ENCODE measurements at regions of chr2 and their contacts with region 1.

Region 1: GRCh38 chr2:196068271-196069209 is at the start of gene DNAH7:
- DNase-seq: peak; percentile 86
- H3K4me3 ChIP-seq: peak within 1 kb of the TSS; percentile 7 to 98 (median 52)
- H3K27ac ChIP-seq: peak within 1 kb of the TSS; percentile 27
- H3K4me1 ChIP-seq: peaks cover 5% of the 10 kb centered on the region
- H3K27me3 ChIP-seq: peaks cover 17 to 41% of the 10 kb centered on the region in 2 experiments
- CTCF ChIP-seq: peak; percentile 90 to 99
- POLR2A ChIP-seq: peak; percentile 45
- total RNA-seq, gene DNAH7: 0.05 and 0.24 TPM in 2 replicates

Region 2: GRCh38 chr2:194686569-194686968 is 1382.0 kb before region 1 on chr2:
- CTCF ChIA-PET with region 1: no interaction called
- POLR2A ChIA-PET with region 1: no interaction called
- dilution Hi-C with region 1: no loop called
- intact Hi-C with region 1: loop called (anchors 10 kb)
- DNase-seq: no peak
- H3K4me3 ChIP-seq: no peak overlapping the region
- H3K27ac ChIP-seq: no peak overlapping the region
- H3K4me1 ChIP-seq: no peaks in the 10 kb centered on the region
- H3K27me3 ChIP-seq: no peaks in the 10 kb centered on the region
- CTCF ChIP-seq: no peak
- POLR2A ChIP-seq: no peak

Region 3: GRCh38 chr2:195498176-195498575 is 570.4 kb before region 1 on chr2:
- CTCF ChIA-PET with region 1: interaction called, 31 read pairs
- POLR2A ChIA-PET with region 1: no interaction called
- dilution Hi-C with region 1: no loop called
- intact Hi-C with region 1: loop called (anchors 2 kb)
- DNase-seq: peak; percentile 38
- H3K4me3 ChIP-seq: no peak overlapping the region
- H3K27ac ChIP-seq: no peak overlapping the region
- H3K4me1 ChIP-seq: no peaks in the 10 kb centered on the region
- H3K27me3 ChIP-seq: no peaks in the 10 kb centered on the region
- CTCF ChIP-seq: peak in 1 of 2 donors; percentile 23
- POLR2A ChIP-seq: no peak

Region 4: GRCh38 chr2:195575879-195576401 is 492.6 kb before region 1 on chr2:
- CTCF ChIA-PET with region 1: interaction called, 21 read pairs
- POLR2A ChIA-PET with region 1: no interaction called
- dilution Hi-C with region 1: no loop called
- intact Hi-C with region 1: loop called (anchors 1 kb)
- DNase-seq: peak; percentile 59
- H3K4me3 ChIP-seq: no peak overlapping the region
- H3K27ac ChIP-seq: no peak overlapping the region
- H3K4me1 ChIP-seq: no peaks in the 10 kb centered on the region
- H3K27me3 ChIP-seq: no peaks in the 10 kb centered on the region
- CTCF ChIP-seq: peak in 1 of 2 donors; percentile 1
- POLR2A ChIP-seq: no peak

Region 5: GRCh38 chr2:195664528-195664927 is 404.0 kb before region 1 on chr2:
- CTCF ChIA-PET with region 1: interaction called, 42 read pairs
- POLR2A ChIA-PET with region 1: no interaction called
- dilution Hi-C with region 1: no loop called
- intact Hi-C with region 1: loop called (anchors 1 kb)
- DNase-seq: no peak
- H3K4me3 ChIP-seq: no peak overlapping the region
- H3K27ac ChIP-seq: no peak overlapping the region
- H3K4me1 ChIP-seq: peaks cover 9% of the 10 kb centered on the region
- H3K27me3 ChIP-seq: no peaks in the 10 kb centered on the region
- CTCF ChIP-seq: no peak
- POLR2A ChIP-seq: no peak

Region 6: GRCh38 chr2:196054631-196055030 is 13.9 kb before region 1 on chr2:
- CTCF ChIA-PET with region 1: interaction called, 10 read pairs
- POLR2A ChIA-PET with region 1: no interaction called
- dilution Hi-C with region 1: no loop called
- intact Hi-C with region 1: no loop called
- DNase-seq: no peak
- H3K4me3 ChIP-seq: no peak overlapping the region
- H3K27ac ChIP-seq: no peak overlapping the region
- H3K4me1 ChIP-seq: no peaks in the 10 kb centered on the region
- H3K27me3 ChIP-seq: peaks cover 8 to 16% of the 10 kb centered on the region in 2 experiments
- CTCF ChIP-seq: no peak
- POLR2A ChIP-seq: no peak

Measured in endothelial cell of umbilical vein (primary cell).